Heart left ventricle (tissue), 16 donors: ENCODE measurements at regions of chr4 and their contacts with region 1.

Region 1: GRCh38 chr4:1167247-1167949 is 5.0 kb downstream of the SPON2 start:
- DNase-seq: peak; percentile 80 to 90 (median 81)
- ATAC-seq: peak; percentile 62 to 90 (median 84)
- H3K4me3 ChIP-seq: peak overlapping the region; percentile 6 to 72 (median 58)
- H3K27ac ChIP-seq: peak overlapping the region in 3 of 12 donors; percentile 4 to 55 (median 15)
- H3K4me1 ChIP-seq: peaks cover 0 to 52% (median 21%) of the 10 kb centered on the region in 12 donors
- H3K27me3 ChIP-seq: peaks cover 7 to 32% (median 21%) of the 10 kb centered on the region in 9 donors
- CTCF ChIP-seq: peak; percentile 81 to 96 (median 92)
- POLR2A ChIP-seq: no peak

Region 2: GRCh38 chr4:1113311-1114009 is 53.9 kb before region 1 on chr4 and contains the start of gene RNF212:
- intact Hi-C with region 1: no loop called
- DNase-seq: peak in 1 of 5 donors; percentile 32
- ATAC-seq: peak in 2 of 4 donors; percentile 42 to 52
- H3K4me3 ChIP-seq: peak within 1 kb of the TSS in 10 of 12 donors; percentile 11 to 51 (median 43)
- H3K27ac ChIP-seq: no peak within 1 kb of the TSS
- H3K4me1 ChIP-seq: peaks cover 0 to 6% (median 0%) of the 10 kb centered on the region in 12 donors
- H3K27me3 ChIP-seq: peaks cover 5 to 64% (median 29%) of the 10 kb centered on the region in 9 donors
- CTCF ChIP-seq: no peak
- POLR2A ChIP-seq: no peak
- total RNA-seq, gene RNF212: 0.25 to 1.6 (median 0.43) TPM in 5 of 9 donors, not detected in the others

Region 3: DNA sequence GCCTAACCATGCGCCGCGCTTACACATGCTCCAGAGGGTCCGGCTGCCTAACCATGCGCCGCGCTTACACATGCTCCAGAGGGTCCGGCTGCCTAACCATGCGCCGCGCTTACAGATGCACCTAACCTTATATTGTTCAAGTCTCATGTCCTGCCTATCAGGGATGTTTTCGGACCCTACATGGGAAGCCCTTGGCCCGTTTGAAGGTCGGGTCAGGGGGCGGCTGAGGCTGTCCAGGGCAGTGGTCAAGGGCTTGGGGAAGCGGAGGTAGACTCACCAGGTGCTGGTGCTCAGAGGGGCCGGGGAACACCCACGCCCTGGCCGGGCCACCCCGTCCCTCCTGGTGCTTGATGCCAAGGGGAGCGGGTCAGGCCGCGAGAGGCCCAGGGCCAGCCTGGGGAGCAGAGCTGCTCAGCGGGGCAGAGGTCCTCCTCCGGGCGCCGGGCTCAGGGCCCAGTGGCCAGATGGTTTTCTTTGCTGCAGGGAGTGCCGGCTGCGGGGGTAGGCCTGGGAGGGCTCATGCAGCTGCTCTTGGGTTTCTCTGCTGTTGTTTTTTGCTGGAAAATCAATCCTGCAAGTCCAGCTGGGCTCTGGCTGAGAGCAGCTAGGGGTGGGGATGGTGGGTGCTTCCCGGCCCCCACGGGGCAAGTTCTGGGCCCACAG is 40.3 kb after region 1 on chr4:
- intact Hi-C with region 1: loop called in 6 of 10 experiments (anchors 2 to 5 kb)
- DNase-seq: peak; percentile 57 to 83 (median 75)
- ATAC-seq: peak in 3 of 4 donors; percentile 31 to 44 (median 44)
- H3K4me3 ChIP-seq: peak overlapping the region in 3 of 12 donors; percentile 2 to 24 (median 6)
- H3K27ac ChIP-seq: peak overlapping the region; percentile 35 to 87 (median 70)
- H3K4me1 ChIP-seq: peaks cover 5 to 55% (median 43%) of the 10 kb centered on the region in 12 donors
- H3K27me3 ChIP-seq: no peaks in the 10 kb centered on the region
- CTCF ChIP-seq: no peak
- POLR2A ChIP-seq: no peak

Region 4: GRCh38 chr4:1243451-1244080 is 76.2 kb after region 1 on chr4:
- intact Hi-C with region 1: loop called in 9 of 10 experiments (anchors 1 to 10 kb)
- DNase-seq: peak in 1 of 5 donors; percentile 61
- ATAC-seq: no peak
- H3K4me3 ChIP-seq: no peak overlapping the region
- H3K27ac ChIP-seq: peak overlapping the region in 1 of 12 donors; percentile 96
- H3K4me1 ChIP-seq: peaks cover 4 to 72% (median 60%) of the 10 kb centered on the region in 12 donors
- H3K27me3 ChIP-seq: no peaks in the 10 kb centered on the region
- CTCF ChIP-seq: no peak
- POLR2A ChIP-seq: no peak

Region 5: GRCh38 chr4:1266881-1267763 is 99.7 kb after region 1 on chr4:
- intact Hi-C with region 1: loop called in 9 of 10 experiments (anchors 1 to 5 kb)
- DNase-seq: no peak
- ATAC-seq: no peak
- H3K4me3 ChIP-seq: no peak overlapping the region
- H3K27ac ChIP-seq: peak overlapping the region in 1 of 12 donors; percentile 52
- H3K4me1 ChIP-seq: no peaks in the 10 kb centered on the region
- H3K27me3 ChIP-seq: no peaks in the 10 kb centered on the region
- CTCF ChIP-seq: no peak
- POLR2A ChIP-seq: no peak

Region 6: DNA sequence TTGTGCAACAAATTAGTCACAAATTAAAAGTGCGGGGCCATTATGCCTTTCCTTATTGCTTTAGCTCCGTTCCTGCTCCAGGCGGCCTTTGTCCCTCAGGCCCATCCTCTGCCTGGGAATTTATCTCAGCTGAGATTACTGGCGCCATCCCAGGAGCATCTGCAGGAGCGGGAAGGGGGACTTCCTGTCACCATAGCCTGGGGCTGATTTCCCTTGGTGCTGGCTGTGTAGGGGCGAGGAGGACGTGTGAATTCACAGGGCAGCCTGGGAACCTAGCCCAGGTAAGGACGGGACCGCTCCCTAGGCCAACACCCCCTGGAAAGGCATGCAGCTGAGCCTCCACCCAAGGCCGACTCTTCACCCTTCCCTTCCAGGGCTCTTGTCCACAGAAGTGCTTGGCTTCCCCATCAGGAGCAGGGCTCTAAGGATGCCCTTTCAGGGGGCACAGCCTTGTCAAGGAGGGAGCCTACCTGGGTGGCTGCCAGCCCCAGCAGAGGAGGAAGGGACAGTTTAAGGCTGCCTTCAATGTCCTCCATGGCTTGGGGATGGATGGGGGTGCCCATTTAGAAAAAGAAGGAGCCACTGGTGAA is 311.5 kb after region 1 on chr4:
- intact Hi-C with region 1: no loop called
- DNase-seq: no peak
- ATAC-seq: no peak
- H3K4me3 ChIP-seq: no peak overlapping the region
- H3K27ac ChIP-seq: no peak overlapping the region
- H3K4me1 ChIP-seq: no peaks in the 10 kb centered on the region
- H3K27me3 ChIP-seq: peaks cover 0 to 5% (median 0%) of the 10 kb centered on the region in 9 donors
- CTCF ChIP-seq: no peak
- POLR2A ChIP-seq: no peak

Region 7: DNA sequence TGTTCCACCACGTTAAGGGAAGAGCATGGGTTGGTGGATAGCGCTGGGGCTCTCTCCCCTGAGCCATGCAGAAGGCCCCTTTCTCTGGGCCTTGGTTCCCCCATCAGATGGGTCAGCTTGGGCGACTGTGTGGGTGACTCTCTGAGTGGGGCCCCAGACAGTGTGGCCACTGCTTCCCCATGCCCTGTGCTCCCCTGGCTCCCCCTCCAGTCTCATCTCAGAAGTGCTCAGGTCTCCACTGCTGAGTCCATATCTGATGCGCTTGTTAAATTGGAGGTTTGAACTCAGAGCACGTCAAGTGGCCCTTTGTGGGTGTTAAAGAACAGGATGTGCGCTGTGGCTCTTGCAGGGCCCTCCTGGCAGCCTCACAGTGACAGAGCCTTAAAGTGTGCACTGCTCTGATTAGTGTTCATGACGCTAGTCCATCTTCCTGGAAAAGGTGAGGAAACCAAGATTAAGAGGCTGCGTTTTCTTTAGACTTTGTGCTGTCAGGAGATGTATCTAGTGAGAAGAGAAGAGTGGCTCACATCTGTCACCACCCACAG is 781.6 kb after region 1 on chr4:
- intact Hi-C with region 1: no loop called
- DNase-seq: no peak
- ATAC-seq: peak in 3 of 4 donors; percentile 13 to 17 (median 16)
- H3K4me3 ChIP-seq: no peak overlapping the region
- H3K27ac ChIP-seq: no peak overlapping the region
- H3K4me1 ChIP-seq: no peaks in the 10 kb centered on the region
- H3K27me3 ChIP-seq: no peaks in the 10 kb centered on the region
- CTCF ChIP-seq: no peak
- POLR2A ChIP-seq: no peak